ENCODE measurements at regions of chr7 and their contacts with region 1.

Region 1: GRCh38 chr7:50266635-50267386 is 37.7 kb upstream of the IKZF1 start:
- DNase-seq: peak; percentile 30 to 92 (median 78)
- ATAC-seq: peak; percentile 78
- H3K4me3 ChIP-seq: peak overlapping the region; percentile 19
- H3K4me3 Mint-ChIP-seq: peak overlapping the region; percentile 69
- H3K27ac ChIP-seq: peak overlapping the region; percentile 79 to 82
- H3K27ac Mint-ChIP-seq: peak overlapping the region; percentile 90
- H3K4me1 ChIP-seq: peaks cover 87% of the 10 kb centered on the region
- H3K4me1 Mint-ChIP-seq: peaks cover 98% of the 10 kb centered on the region
- H3K27me3 ChIP-seq: no peaks in the 10 kb centered on the region
- H3K27me3 Mint-ChIP-seq: no peaks in the 10 kb centered on the region
- CTCF ChIP-seq: no peak

Region 2: DNA sequence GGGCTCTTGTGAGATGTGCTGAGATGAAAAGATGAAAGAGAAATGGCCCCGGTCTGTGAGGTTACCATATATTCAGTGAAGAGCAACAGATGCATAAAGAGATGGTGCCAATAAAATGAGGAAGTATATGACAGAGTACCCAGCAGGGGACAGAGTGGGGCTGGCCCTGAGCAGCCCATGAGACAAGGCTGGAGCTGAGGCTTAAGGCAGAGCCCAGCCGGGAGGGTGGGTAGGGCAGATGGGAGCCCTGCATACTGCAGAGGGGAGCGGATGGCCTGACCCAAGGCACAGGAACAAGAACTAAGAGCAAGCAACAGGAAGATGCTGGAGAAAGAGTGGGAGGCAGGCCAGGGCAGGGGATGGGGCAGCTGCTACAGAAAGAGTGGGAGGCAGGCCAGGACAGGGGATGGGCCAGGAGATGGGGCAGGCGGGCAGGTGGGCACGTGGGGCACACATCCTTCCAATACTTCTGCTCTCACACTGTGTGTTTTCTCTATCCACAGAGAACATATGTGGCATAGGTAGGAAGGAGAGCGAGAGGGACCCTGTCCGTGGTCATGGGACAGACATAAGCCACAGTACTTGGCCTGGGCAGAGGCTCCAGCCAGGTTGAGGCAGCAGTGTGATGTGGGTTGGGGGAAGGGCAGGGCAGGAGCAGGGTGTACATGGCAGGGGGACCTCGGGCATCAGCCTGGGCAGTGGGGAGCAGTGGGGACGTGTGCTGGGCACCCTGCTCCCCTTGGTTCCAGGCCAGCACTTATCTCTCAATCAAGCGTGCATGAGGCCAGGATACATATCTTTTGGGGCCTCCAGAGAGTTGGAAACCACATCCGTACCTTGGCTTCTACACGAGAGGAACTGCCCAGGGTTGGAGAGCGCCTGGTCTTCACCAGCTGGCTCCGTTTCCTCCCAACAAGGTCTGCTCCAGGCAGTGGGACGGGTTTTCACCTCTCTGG is 53.9 kb before region 1 on chr7:
- CTCF ChIA-PET with region 1: no interaction called
- POLR2A ChIA-PET with region 1: interaction called, 15 read pairs
- intact Hi-C with region 1: no loop called
- DNase-seq: peak in 4 of 14 experiments; percentile 52 to 59 (median 56)
- ATAC-seq: peak; percentile 47
- H3K4me3 ChIP-seq: no peak overlapping the region
- H3K4me3 Mint-ChIP-seq: peak overlapping the region; percentile 46
- H3K27ac ChIP-seq: no peak overlapping the region
- H3K27ac Mint-ChIP-seq: peak overlapping the region; percentile 92
- H3K4me1 ChIP-seq: peaks cover 94% of the 10 kb centered on the region
- H3K4me1 Mint-ChIP-seq: peaks cover 98% of the 10 kb centered on the region
- H3K27me3 ChIP-seq: no peaks in the 10 kb centered on the region
- H3K27me3 Mint-ChIP-seq: no peaks in the 10 kb centered on the region
- CTCF ChIP-seq: no peak

Region 3: GRCh38 chr7:50251765-50252164 is 15.0 kb before region 1 on chr7:
- CTCF ChIA-PET with region 1: interaction called, 5 read pairs
- POLR2A ChIA-PET with region 1: interaction called, 17 read pairs
- intact Hi-C with region 1: no loop called
- DNase-seq: no peak
- ATAC-seq: no peak
- H3K4me3 ChIP-seq: no peak overlapping the region
- H3K4me3 Mint-ChIP-seq: no peak overlapping the region
- H3K27ac ChIP-seq: no peak overlapping the region
- H3K27ac Mint-ChIP-seq: no peak overlapping the region
- H3K4me1 ChIP-seq: no peaks in the 10 kb centered on the region
- H3K4me1 Mint-ChIP-seq: peaks cover 43% of the 10 kb centered on the region
- H3K27me3 ChIP-seq: no peaks in the 10 kb centered on the region
- H3K27me3 Mint-ChIP-seq: no peaks in the 10 kb centered on the region
- CTCF ChIP-seq: no peak

Region 4: DNA sequence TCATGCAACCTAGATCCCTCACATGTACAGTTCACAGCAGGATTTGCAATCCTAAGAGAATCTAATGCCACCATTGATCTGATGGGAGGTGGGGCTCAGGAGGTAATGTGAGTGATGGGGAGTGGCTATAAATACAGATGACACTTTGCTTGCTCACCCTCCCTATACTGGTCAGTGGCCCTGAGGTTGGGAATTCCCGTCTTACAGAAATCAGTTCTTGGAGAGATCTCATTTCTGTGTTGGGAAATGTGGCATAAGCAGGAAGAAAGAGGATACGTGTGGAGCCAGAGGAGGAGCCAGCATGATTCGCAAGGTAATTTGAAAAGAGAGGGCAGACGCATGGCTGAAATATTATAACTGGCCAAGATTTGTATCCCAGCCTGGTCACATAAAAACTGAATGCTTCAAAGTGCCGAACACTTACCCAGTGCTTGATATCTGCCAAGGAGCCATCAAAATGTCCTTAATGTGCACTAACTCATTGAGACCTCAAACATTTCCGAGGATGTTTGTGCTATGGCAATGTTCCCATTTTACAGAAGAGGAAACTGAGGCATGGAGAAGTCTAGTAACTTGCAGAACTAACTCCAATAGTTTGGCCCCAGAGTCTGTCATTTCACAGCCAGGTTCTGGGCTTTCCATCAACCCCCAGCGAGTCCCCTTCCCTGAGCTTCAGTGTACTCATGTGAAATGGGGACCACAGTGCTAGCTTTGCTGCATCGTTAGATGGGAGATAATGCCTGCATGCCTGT is 32.2 kb after region 1 on chr7:
- CTCF ChIA-PET with region 1: interaction called, 3 read pairs
- POLR2A ChIA-PET with region 1: interaction called, 350 read pairs
- intact Hi-C with region 1: loop called in 1 of 2 experiments (anchors 2 kb)
- DNase-seq: no peak
- ATAC-seq: no peak
- H3K4me3 ChIP-seq: no peak overlapping the region
- H3K4me3 Mint-ChIP-seq: no peak overlapping the region
- H3K27ac ChIP-seq: no peak overlapping the region
- H3K27ac Mint-ChIP-seq: peak overlapping the region; percentile 90
- H3K4me1 ChIP-seq: peaks cover 28% of the 10 kb centered on the region
- H3K4me1 Mint-ChIP-seq: peaks cover 66% of the 10 kb centered on the region
- H3K27me3 ChIP-seq: no peaks in the 10 kb centered on the region
- H3K27me3 Mint-ChIP-seq: no peaks in the 10 kb centered on the region
- CTCF ChIP-seq: no peak

Region 5: DNA sequence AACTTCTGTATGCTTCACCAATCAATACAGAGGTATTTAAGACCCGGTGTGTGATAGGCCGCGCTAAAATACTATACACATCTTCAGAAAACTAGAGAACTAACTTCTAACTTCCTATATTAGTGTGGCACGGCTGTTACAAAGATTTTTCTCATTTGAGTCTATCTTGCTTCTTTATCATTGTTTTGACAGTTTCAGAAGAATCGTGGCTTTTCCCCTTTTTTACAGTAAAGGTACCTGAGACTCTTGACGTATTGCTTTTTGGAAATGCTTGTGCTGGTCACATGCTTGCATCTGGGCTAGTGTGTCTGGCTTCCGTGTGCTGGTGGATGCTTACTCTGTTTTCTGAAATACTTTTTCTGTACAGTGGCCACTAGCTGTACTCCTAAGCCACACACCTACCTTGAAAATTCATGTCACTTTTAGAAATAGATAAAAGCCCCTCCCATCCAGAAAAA is 50.4 kb after region 1 on chr7:
- CTCF ChIA-PET with region 1: interaction called, 6 read pairs
- POLR2A ChIA-PET with region 1: interaction called, 350 read pairs
- intact Hi-C with region 1: loop called in 1 of 2 experiments (anchors 2 kb)
- DNase-seq: peak in 7 of 14 experiments; percentile 46 to 94 (median 75)
- ATAC-seq: peak; percentile 73
- H3K4me3 ChIP-seq: peak overlapping the region; percentile 55
- H3K4me3 Mint-ChIP-seq: peak overlapping the region; percentile 100
- H3K27ac ChIP-seq: peak overlapping the region; percentile 91 to 93
- H3K27ac Mint-ChIP-seq: no peak overlapping the region
- H3K4me1 ChIP-seq: peaks cover 71% of the 10 kb centered on the region
- H3K4me1 Mint-ChIP-seq: peaks cover 98% of the 10 kb centered on the region
- H3K27me3 ChIP-seq: no peaks in the 10 kb centered on the region
- H3K27me3 Mint-ChIP-seq: no peaks in the 10 kb centered on the region
- CTCF ChIP-seq: peak; percentile 29

Region 6: GRCh38 chr7:50349963-50350944 is 83.4 kb after region 1 on chr7:
- CTCF ChIA-PET with region 1: no interaction called
- POLR2A ChIA-PET with region 1: interaction called, 10 read pairs
- intact Hi-C with region 1: no loop called
- DNase-seq: peak; percentile 47 to 84 (median 75)
- ATAC-seq: peak; percentile 63
- H3K4me3 ChIP-seq: peak overlapping the region; percentile 23
- H3K4me3 Mint-ChIP-seq: peak overlapping the region; percentile 52
- H3K27ac ChIP-seq: peak overlapping the region; percentile 86 to 95
- H3K27ac Mint-ChIP-seq: no peak overlapping the region
- H3K4me1 ChIP-seq: peaks cover 92% of the 10 kb centered on the region
- H3K4me1 Mint-ChIP-seq: peaks cover 98% of the 10 kb centered on the region
- H3K27me3 ChIP-seq: no peaks in the 10 kb centered on the region
- H3K27me3 Mint-ChIP-seq: no peaks in the 10 kb centered on the region
- CTCF ChIP-seq: no peak

Region 7: DNA sequence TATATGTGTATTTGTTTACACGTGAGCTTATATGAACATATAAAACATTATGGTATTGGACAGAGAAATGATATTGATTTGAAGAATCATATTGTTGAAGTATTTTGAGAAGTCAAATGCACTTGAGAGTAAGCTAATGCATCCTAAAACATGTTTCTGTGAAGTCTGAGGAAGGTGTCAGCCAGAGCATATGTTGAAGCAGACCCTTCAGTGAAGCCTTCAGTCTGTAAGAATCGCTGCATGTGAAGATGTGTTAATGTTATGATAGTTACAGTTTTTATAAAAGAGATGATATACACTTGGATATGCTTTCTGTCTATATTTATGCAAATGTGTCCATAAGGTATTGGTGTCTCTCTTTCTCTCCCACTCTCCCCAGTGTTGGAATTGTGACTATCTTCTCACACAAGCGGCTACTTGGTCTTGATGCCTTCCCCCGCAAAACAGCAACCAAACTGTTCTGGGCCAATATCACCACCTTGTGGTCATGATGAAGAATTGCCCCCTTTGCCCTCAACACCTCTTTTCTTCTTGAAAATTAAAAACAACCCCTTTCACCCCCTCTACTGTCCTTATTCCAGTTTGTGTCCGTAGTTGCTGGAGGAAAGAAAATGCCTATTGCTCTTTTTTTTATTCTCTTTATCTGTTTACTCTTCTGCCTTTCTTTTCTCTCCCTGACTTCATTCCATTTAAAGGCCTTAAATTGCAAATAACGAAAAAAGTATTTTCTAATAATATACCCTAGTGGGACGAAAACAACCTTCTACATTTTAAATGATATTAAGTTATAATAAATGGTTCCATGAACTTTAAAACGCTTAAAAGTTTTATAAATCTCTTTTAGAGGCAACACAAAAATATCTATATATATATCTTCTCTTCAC is 102.6 kb after region 1 on chr7:
- CTCF ChIA-PET with region 1: interaction called, 4 read pairs
- POLR2A ChIA-PET with region 1: interaction called, 23 read pairs
- intact Hi-C with region 1: loop called in 1 of 2 experiments (anchors 2 kb)
- DNase-seq: peak in 7 of 14 experiments; percentile 45 to 91 (median 65)
- ATAC-seq: peak; percentile 58
- H3K4me3 ChIP-seq: no peak overlapping the region
- H3K4me3 Mint-ChIP-seq: peak overlapping the region; percentile 71
- H3K27ac ChIP-seq: peak overlapping the region; percentile 68 to 73
- H3K27ac Mint-ChIP-seq: no peak overlapping the region
- H3K4me1 ChIP-seq: peaks cover 80% of the 10 kb centered on the region
- H3K4me1 Mint-ChIP-seq: peaks cover 97% of the 10 kb centered on the region
- H3K27me3 ChIP-seq: no peaks in the 10 kb centered on the region
- H3K27me3 Mint-ChIP-seq: no peaks in the 10 kb centered on the region
- CTCF ChIP-seq: peak; percentile 88

Region 8: DNA sequence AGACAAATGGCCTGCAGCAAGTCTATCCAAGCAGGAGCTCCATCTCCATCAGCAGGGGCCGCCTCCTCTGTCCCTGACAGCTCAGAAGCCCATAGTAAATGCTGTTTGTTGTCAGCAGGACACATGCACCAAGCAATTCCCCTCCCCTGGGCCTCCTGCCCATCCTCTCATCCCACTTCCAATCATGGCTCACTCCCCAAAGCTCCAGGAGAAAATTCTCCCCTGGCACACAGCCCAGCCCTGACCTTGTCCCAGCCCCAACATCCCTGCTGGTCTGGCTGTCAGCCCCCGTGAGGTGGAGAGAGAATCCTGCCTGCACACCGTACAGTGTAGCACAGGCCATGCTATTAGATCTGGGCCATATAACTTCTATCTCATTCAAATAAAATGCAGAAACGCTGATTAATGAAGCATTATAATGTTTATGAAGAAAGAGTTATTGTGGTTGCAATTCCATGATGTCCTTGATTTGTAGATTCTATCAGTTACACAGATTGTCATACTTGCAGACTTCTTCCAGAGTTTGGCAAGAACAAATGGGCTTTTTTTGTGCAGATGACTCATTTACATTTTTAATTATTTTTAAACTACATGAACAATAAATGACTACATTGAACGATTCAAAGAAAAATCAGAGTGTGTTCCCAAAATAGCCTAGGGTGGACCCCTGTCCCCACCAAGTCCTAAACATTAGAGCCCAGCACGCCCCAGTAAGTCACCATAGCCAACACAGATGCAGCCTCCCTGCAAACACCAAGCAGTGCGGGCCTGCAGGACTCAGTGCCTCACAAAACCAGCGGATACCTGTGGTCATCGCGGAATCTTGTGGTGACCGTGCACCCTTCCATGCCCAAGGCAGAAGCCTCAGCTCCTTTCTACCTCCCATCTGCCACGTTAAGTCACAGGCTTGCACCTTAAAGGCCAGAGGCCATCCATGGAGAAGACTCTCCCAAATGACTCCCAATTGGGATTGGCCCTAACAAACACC is 979.7 kb after region 1 on chr7:
- CTCF ChIA-PET with region 1: no interaction called
- POLR2A ChIA-PET with region 1: no interaction called
- intact Hi-C with region 1: no loop called
- DNase-seq: no peak
- ATAC-seq: no peak
- H3K4me3 ChIP-seq: no peak overlapping the region
- H3K4me3 Mint-ChIP-seq: no peak overlapping the region
- H3K27ac ChIP-seq: no peak overlapping the region
- H3K27ac Mint-ChIP-seq: no peak overlapping the region
- H3K4me1 ChIP-seq: no peaks in the 10 kb centered on the region
- H3K4me1 Mint-ChIP-seq: no peaks in the 10 kb centered on the region
- H3K27me3 ChIP-seq: no peaks in the 10 kb centered on the region
- H3K27me3 Mint-ChIP-seq: no peaks in the 10 kb centered on the region
- CTCF ChIP-seq: no peak

Region 9: GRCh38 chr7:51732951-51733350 is 1466.1 kb after region 1 on chr7:
- CTCF ChIA-PET with region 1: no interaction called
- POLR2A ChIA-PET with region 1: no interaction called
- intact Hi-C with region 1: no loop called
- DNase-seq: no peak
- ATAC-seq: no peak
- H3K4me3 ChIP-seq: no peak overlapping the region
- H3K4me3 Mint-ChIP-seq: no peak overlapping the region
- H3K27ac ChIP-seq: no peak overlapping the region
- H3K27ac Mint-ChIP-seq: no peak overlapping the region
- H3K4me1 ChIP-seq: no peaks in the 10 kb centered on the region
- H3K4me1 Mint-ChIP-seq: no peaks in the 10 kb centered on the region
- H3K27me3 ChIP-seq: no peaks in the 10 kb centered on the region
- H3K27me3 Mint-ChIP-seq: no peaks in the 10 kb centered on the region
- CTCF ChIP-seq: no peak

Measured in CD4-positive, alpha-beta T cell (primary cell).